ENCODE measurements at regions of chr6 and their contacts with region 1.

Region 1: GRCh38 chr6:142946181-142946923 is 1.4 kb upstream of the HIVEP2 start:
- DNase-seq: peak; percentile 89 to 100 (median 97)

Region 2: DNA sequence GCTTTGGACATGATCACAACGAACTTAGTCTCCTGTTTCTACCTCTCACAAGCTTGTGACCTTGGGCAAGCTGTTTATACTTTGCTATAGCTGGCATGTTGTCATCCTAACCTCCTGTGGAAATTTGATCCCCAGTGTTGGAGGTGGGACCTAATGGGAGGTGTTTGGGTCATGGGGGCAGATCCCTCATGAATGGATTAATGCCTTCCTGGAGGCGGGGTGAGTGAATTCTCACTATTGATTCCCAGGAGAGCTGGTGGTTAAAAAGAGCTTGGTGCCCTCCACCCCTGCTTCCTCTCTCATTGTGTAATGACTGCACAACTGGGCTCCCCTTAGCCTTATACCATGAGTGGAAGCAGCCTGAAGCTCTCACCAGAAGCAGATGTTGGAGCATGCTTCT is 230.3 kb before region 1 on chr6:
- intact Hi-C with region 1: no loop called
- DNase-seq: no peak

Region 3: DNA sequence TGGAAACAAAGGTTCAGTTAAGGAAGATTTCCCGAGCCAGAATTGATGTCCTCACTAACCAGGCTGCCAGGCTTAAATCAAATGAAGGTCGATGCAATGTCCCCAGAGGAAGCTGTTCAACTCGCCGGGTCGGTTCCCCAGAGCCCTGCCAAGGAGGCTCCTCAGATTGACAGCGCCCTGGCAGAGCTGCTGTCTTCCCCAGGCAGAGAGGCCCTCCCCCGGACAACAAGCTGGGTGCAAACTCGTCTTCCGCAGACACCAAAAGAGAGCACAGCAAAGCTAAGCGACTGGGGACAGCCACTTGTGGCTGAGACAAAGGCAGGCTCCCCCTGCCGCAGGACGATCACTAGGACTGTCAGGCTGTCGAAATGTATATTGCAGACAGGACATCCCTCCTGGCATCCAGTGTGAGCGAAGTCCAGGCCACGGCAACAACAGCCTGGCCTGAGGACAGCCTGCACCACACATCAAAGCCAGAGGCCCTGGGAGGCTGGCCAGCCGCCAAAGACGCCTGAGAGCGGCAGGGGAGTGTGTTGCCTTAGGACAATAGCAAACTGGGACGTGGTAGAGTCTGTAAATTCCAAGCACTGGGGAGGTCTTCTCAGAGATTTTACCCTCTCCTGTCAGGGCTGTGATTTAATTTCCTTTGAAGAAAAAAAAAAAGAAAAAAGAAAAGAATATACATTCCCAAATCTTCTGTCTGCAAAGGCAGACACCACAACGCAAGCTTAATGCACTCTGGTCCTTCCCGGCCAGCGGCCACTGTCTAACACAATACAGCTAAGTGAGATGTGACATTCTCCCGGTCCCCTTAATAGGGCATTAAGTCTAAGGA is 100.5 kb before region 1 on chr6:
- intact Hi-C with region 1: loop called (anchors 10 kb)
- DNase-seq: peak; percentile 51 to 89 (median 78)

Region 4: DNA sequence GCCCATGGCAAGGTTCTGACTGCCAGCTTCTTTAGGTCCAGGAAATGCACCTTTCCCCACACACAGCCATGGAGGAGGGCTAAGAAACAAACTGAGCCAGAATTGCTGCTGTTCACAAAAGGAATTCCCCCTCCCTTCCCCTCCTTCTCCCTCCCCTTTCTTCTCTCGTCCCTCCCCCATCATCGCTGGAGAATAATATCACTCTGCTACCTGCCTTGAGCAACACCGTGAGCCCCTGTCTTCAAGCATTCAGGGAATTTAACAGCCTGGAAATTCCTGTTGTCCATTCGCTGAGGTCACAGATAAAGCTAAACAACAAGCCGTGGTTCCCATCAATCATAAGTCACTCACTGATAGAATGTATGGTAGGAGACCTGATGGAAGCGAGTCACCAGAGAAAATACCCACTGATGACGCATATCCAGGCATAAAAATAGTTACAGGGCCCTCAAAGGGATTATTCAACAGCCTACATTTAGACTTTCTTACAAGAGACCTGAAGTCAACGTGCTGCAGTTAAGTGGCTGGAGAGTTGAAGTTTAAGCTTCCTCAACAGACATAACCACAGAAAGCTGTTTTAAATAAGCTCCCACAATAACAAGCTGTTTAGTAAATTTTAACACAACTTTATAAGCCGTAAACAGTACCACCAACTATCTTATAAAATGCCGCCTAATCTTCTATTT is 61.0 kb before region 1 on chr6:
- intact Hi-C with region 1: loop called (anchors 10 kb)
- DNase-seq: peak in 12 of 42 donors; percentile 29 to 67 (median 48)

Region 5: DNA sequence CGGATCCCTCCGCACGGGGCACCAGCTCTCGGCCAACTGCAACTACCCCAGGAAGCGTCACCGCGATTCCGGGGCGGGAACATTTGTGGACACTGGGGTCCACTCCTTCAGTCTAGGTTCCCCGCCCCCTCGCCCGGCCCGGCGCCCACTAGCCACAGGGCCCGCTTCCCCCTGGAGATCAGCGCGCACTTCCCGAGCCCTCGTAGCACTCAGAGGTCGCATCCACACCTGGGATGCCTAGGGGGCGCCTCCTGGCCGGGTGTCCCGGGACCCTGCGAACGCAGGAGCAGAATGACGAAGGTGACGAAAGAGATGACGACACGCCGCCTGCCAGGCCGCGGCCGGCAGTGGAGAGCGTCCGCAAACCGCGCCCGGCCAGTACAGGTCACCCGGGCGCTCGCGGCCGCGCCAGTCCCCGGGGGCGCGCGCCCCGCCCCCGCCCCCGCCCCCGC is 114.0 kb after region 1 on chr6:
- intact Hi-C with region 1: loop called (anchors 2 kb)
- DNase-seq: peak; percentile 46 to 86 (median 74)